ENCODE measurements at regions of chr1 and their contacts with region 1.

Region 1: DNA sequence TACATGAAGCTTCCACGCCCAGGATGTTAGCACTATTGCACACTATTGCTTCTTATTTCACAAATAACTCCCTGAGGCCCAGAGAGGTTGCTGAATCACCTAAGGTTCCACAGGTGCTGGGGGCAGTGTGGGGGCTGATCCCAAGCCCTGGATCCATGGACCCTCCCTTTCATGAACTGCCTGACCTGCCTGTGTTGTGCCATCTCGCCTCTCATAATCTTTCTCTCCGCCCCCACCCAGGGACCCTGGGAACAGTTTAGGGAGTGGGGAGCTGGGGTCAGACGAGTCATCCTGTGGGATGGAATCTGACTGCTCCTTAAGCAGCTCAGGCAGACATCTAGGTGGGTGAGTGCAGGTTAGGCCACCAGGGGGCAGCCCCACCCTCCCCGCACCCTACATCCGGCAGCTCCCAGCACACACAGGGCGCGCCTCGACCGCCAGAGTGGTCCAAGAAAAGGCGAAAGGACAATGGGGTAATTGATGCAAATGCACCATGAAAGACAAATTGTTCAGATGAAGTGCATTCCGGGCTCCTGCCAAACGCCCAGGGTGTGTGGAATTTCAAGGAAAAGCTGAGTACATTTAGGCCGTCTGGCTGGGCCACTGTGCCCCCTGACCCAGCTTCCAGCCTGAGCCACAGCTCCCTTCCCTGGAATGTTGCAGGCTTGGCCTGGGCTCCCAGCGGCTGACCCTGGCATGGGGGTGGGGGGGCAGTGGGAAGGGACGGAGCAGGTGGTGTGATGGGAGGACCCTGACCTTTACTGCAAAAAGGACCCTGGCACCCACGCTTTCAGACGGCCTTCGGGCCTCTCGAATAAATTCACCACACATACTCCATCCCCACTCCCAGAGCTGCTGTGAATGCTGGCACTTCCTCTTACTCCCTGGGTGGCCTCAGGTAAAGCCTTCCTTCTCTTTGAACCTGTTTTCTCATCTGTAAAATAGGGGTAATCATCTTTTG is 20.8 kb downstream of the PHLDA3 start:
- DNase-seq: peak; percentile 73 to 96 (median 84)

Region 2: DNA sequence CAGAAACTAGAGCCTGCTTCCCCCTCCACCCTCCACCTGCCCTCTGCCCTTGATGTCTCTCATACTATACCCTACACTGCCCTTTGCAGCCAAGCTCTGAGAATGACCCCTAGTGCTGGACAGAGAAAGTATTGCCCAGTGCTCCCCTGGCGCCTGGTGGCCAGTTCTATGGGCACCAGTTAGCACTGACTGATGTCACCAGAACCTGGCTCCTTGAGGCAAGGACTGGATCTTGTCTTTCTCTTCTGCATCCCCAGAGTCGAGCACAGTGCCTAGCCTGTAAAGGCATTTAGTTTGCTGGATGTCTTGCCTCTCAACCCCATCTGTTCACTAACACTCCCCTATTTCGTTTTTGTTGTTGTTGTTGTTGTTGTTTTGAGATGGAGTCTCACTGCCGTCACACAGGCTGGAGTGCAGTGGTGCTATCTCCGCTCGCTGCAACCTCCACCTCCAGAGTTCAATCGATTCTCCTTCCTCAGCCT is 14.9 kb after region 1 on chr1:
- intact Hi-C with region 1: loop called (anchors 1 kb)
- DNase-seq: peak in 8 of 10 donors; percentile 56 to 95 (median 71)

Region 3: DNA sequence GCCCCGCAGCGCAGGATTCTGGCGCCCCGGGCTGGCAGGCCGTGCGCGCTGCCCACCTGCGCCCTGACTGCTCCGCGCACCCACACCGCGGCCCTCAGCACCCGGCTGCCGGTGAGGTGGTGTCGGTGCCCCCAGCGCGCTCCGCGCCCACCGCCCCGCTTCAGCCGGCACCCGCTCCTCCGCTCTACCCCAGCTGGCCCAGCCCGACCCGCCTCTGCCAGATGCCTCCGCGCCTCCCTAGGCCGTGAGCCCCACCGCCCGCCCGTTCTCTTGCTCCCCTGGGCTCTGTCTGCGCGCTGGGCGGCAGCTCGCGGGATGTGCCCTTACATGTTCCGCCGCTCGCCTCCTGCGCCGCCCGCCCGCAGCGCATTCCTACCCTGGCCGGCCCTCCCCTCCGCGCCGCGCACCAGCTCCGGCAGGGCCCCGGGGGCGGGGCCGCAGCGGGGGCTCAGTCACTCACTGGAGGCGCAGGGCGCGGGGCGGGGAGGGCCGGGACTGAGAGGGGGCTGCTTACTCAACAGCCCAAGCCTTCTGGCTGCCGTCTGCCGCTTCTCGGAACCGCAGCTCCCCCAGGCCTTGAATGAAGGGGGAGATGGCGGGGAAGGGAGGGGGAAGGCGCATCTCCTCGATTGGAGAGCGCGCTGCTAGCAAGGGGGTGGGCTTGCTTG is 20.8 kb after region 1 on chr1 and contains the start of gene PHLDA3:
- intact Hi-C with region 1: loop called (anchors 1 kb)
- DNase-seq: peak; percentile 82 to 99 (median 90)

Region 4: DNA sequence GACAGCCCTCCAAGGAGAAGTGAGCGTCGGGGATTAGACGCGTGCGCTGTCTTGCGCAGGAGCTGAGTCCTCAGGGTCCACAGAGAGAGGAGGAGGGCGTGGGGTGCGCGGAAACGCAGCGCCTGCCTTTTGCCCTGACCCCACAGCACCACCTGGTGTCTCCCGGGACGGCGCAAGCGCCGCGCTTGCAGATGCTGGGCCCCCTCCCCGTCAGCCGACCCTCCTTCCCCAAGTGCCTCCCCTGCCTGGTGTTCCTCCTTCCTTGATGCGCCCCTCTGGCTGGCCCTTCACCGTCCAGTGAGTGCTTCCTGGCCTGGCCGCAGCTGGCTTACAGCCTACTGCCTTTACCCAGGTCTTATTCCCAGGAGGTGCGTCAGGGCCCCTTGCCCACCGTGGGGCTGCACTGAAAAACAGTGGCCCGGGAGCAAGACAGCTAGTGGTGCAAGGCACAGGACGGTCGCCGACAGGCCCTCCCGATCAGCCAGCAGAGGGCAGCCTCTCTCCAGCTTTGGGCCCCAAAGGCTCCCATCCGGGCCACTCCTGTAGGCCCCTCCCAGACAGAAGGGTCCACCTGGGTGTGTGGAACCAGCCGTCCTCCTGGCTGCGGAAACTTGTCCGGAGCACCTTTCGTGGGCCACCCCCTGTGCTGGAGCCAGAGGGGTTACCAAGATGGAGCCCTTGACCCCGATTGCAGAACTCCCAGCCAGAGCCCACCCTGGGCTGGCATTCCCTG is 33.7 kb after region 1 on chr1:
- intact Hi-C with region 1: loop called (anchors 5 kb)
- DNase-seq: peak; percentile 80 to 98 (median 91)